Activated T-helper 1 cell treated with anti-CD3 and anti-CD28 coated beads, Interleukin-12 subunit alpha, Interleukin-12 subunit beta, Interleukin-2, Interleukin-4 antibody, amounts not matched to agents 30 ng/mL and 10 ng/mL and 1 ng/mL, durations not matched to agents 14 hours and 24 hours and 36 hours (primary cell): ENCODE measurements at regions of chr16 and their contacts with region 1.

Region 1: GRCh38 chr16:27286451-27286850 is 17.9 kb upstream of the NSMCE1 start:
- DNase-seq: no peak
- H3K4me3 Mint-ChIP-seq: no peak overlapping the region
- H3K27ac Mint-ChIP-seq: no peak overlapping the region
- H3K4me1 Mint-ChIP-seq: peaks cover 72% of the 10 kb centered on the region
- H3K27me3 Mint-ChIP-seq: peaks cover 6% of the 10 kb centered on the region

Region 2: DNA sequence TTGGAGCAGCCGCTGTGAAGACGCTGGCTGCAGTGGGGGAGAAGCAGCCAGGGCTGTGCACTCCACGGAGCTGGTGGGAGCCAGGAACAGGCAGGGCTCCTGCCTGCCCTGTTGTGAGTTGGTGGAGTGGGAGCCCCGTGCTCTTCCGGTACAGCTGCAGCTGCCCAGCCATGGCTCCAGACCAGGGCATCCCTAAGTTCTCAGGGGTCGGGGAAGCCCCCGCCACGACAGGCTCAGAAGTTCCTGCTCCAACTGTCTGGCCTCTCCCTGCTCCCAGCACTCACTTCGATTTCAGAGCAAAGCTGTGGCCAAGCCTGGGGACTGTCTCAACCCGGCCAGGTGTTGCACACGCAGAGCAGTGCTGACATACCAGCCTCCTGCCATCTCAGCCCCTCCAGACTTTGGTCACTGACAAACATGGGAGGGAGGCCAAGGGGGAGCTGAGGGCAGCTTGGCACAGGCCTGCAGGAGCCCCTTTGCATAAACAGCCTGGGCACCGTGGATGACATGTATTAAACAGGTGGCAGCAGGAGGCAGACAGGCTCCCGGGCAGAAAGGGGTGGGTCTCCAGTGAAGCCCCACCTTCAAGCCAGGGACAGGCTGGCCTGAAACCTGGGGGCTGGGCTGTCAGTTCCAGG is 97.0 kb before region 1 on chr16:
- intact Hi-C with region 1: no loop called
- DNase-seq: no peak
- H3K4me3 Mint-ChIP-seq: no peak overlapping the region
- H3K27ac Mint-ChIP-seq: no peak overlapping the region
- H3K4me1 Mint-ChIP-seq: peaks cover 7% of the 10 kb centered on the region
- H3K27me3 Mint-ChIP-seq: no peaks in the 10 kb centered on the region

Region 3: DNA sequence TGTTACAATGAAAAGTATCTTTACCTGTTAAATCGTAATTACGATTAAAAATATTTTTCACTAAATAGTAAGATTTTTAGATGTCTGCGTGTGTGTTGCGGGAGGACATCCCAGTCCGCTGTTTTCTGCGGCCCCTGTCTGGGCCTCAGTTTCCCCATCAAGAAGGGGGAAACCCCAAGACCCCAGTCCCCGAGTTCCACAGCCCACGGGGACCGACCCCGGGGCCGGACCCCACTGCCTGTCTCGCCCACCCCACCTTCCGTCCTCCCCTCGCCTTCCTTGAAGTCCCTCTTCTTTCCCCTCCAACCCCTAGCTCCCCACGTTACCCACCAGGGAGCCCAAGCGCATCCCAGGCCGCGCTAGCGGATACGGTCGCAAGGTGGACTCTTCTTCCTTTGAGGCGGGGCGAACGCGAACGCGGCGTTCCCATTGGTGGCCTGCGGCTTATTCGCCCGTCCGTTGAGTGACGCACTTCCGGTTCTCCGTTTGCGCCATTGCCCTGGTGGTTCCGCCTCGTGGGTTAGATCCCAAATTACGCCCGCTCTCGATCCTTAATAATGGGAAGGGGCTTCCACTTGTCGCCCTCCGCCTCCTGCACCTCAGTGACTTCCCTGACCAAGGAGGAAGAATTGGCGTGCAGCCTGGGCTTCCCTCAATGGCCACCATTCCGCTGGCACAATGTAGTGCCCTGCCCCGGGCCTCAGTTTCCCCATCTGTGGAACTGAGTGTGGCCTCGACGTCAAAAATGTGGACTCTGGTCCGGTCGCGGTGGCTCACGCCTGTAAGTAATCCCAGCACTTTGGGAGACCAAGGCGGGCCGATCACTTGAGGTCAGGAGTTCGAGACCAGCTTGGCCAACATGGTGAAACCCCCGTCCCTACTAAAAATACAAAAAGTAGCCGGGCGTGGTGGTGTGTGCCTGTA is 17.8 kb before region 1 on chr16 and contains the start of gene NSMCE1:
- intact Hi-C with region 1: loop called (anchors 2 kb)
- DNase-seq: peak; percentile 94
- H3K4me3 Mint-ChIP-seq: peak within 1 kb of the TSS; percentile 96
- H3K27ac Mint-ChIP-seq: peak within 1 kb of the TSS; percentile 97
- H3K4me1 Mint-ChIP-seq: peaks cover 75% of the 10 kb centered on the region
- H3K27me3 Mint-ChIP-seq: no peaks in the 10 kb centered on the region
- total RNA-seq, gene NSMCE1: 128 and 134 TPM in 2 replicates

Region 4: DNA sequence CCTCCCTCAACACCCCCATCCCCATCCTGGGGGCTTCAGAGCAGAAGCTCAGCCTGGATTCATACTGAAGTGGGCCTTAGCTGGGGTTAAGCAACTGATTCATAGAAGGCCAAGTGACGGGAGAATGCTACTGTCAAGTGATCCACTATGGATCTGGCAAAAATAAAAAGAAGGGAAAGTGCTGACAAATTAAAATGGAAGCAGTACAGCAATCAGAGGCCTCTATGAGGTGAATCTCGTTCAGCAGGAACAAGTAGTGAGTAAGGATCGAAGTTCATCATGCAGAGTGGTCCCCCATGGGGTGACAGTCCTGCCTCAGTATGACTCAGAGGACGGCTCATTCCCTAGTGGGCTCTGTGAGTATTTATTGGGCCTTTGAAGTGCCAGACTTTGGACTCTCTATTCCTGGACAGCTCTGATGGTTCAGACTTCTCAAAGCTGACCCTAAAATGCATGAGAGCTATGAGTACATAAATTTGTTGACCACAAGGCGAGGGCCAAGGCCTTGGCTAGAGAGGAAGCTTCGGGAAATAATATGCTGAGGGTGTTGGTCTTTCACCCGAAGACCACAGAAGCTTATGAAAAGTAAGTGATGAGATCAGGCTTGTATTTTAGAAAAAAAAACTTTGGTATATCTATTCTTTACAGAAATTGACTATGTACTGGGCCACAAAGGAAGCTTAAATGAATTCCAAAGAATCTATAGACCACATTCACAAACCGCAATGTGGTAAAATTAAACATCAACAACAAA is 12.6 kb before region 1 on chr16:
- intact Hi-C with region 1: loop called (anchors 1 kb)
- DNase-seq: no peak
- H3K4me3 Mint-ChIP-seq: peak overlapping the region; percentile 32
- H3K27ac Mint-ChIP-seq: peak overlapping the region; percentile 87
- H3K4me1 Mint-ChIP-seq: peaks cover 65% of the 10 kb centered on the region
- H3K27me3 Mint-ChIP-seq: no peaks in the 10 kb centered on the region

Region 5: DNA sequence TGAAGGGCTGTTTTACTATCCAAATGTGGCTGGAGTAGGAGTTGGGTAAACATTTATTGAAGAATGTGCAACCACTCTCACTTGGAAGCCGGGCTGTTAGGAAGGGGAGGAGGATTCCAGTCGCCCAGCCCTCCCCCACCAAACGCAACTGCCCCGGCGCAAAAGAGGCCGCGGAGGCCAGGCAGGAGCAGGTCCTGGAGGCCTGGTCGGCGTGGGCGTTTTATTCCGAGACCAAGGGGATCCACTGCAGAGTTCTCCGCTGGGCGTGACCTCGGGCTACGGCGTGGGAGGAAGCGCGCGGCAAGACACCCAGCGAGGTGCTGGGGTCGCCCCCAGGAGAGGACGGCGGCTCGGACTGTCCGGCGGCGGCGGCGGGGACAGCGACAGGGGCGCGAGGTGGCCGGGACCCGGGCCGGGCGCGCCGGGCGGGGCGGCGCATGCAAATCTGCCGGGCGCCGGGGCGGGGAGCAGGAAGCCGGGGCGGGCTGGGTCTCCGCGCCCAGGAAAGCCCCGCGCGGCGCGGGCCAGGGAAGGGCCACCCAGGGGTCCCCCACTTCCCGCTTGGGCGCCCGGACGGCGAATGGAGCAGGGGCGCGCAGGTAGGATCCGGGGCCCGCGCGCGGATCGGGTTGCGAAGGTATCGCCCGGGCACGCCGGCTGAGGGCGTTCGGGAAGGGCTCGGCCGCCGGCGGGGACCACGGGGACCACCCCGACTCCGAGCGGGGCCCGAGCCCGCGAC is 27.1 kb after region 1 on chr16 and contains the start of gene IL4R:
- intact Hi-C with region 1: loop called (anchors 1 kb)
- DNase-seq: peak; percentile 72
- H3K4me3 Mint-ChIP-seq: peak within 1 kb of the TSS; percentile 94
- H3K27ac Mint-ChIP-seq: peak within 1 kb of the TSS; percentile 99
- H3K4me1 Mint-ChIP-seq: peaks cover 47% of the 10 kb centered on the region
- H3K27me3 Mint-ChIP-seq: peaks cover 2% of the 10 kb centered on the region
- total RNA-seq, gene IL4R: 288 and 320 TPM in 2 replicates